ENCODE measurements at regions of chr16 and their contacts with region 1.

Region 1: GRCh38 chr16:87895641-87896141 is 26.4 kb upstream of the SLC7A5 start:
- DNase-seq: no peak
- H3K4me3 ChIP-seq: no peak overlapping the region
- CTCF ChIP-seq: no peak

Region 2: GRCh38 chr16:87914812-87915211 is 19.1 kb after region 1 on chr16:
- CTCF ChIA-PET with region 1: interaction called, 10 read pairs
- POLR2A ChIA-PET with region 1: no interaction called
- DNase-seq: no peak
- H3K4me3 ChIP-seq: no peak overlapping the region
- CTCF ChIP-seq: no peak

Region 3: DNA sequence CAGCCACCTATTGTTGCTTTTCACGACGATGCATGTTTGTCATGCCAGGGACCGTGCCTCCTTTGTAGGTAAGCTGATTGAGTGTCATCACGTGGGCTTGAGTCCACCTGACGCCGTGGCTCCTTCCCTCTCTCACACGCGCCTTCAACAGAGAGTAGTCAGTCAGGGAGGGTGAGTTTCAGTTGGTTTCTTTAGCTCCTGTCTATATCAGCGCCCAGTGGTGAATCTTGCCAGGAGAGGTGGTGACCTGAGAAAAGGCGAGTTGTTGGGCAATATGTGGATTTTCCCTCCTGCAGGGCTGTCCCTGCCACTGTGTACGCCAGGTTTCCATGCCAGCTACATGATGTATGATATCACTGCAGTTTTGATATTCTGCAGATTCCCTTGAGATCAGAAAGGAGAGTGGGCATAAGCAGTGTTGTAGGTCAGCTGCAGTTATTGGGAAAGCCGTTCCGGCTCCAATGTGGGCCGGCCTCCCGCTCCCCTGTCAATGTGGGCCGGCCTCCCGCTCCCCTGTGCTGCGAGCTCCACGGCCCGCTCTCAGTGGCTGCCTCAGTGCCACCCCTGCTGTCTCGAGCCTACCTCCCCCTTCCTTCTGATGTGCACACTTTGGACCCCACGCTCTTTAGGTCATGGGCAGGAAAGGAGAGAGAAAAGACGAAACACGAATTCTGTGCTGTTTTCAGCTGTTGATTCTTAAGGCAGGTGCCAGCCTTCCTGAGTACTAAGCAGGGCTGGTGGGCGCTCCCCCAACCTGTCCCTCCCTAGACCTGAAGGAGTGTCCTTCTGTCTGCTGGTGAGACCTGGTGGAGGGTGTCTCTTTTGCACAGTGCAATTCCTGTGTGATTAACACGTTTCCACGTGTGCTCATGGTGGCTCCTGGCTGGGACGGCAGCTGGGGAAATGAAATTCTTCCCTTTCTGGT is 87.1 kb after region 1 on chr16:
- CTCF ChIA-PET with region 1: no interaction called
- POLR2A ChIA-PET with region 1: no interaction called
- DNase-seq: no peak
- H3K4me3 ChIP-seq: no peak overlapping the region
- CTCF ChIP-seq: no peak